Activated CD4-positive, alpha-beta memory T cell treated with anti-CD3 and anti-CD28 coated beads for 36 hours (primary cell): ENCODE measurements at regions of chr1 and their contacts with region 1.

Region 1: GRCh38 chr1:185439727-185440415 is 122.8 kb upstream of the IVNS1ABP start:
- DNase-seq: peak; percentile 49
- H3K4me3 Mint-ChIP-seq: no peak overlapping the region
- H3K27ac Mint-ChIP-seq: no peak overlapping the region
- H3K4me1 Mint-ChIP-seq: peaks cover 8% of the 10 kb centered on the region
- H3K27me3 Mint-ChIP-seq: no peaks in the 10 kb centered on the region

Region 2: GRCh38 chr1:184919892-184920291 is 520.0 kb before region 1 on chr1:
- CTCF ChIA-PET with region 1: no interaction called
- POLR2A ChIA-PET with region 1: no interaction called
- intact Hi-C with region 1: no loop called
- DNase-seq: no peak
- H3K4me3 Mint-ChIP-seq: no peak overlapping the region
- H3K27ac Mint-ChIP-seq: no peak overlapping the region
- H3K4me1 Mint-ChIP-seq: peaks cover 14% of the 10 kb centered on the region
- H3K27me3 Mint-ChIP-seq: no peaks in the 10 kb centered on the region

Region 3: GRCh38 chr1:185238447-185238846 is 201.4 kb before region 1 on chr1:
- CTCF ChIA-PET with region 1: no interaction called
- POLR2A ChIA-PET with region 1: no interaction called
- intact Hi-C with region 1: loop called (anchors 10 kb)
- DNase-seq: no peak
- H3K4me3 Mint-ChIP-seq: no peak overlapping the region
- H3K27ac Mint-ChIP-seq: no peak overlapping the region
- H3K4me1 Mint-ChIP-seq: peaks cover 28% of the 10 kb centered on the region
- H3K27me3 Mint-ChIP-seq: no peaks in the 10 kb centered on the region

Region 4: DNA sequence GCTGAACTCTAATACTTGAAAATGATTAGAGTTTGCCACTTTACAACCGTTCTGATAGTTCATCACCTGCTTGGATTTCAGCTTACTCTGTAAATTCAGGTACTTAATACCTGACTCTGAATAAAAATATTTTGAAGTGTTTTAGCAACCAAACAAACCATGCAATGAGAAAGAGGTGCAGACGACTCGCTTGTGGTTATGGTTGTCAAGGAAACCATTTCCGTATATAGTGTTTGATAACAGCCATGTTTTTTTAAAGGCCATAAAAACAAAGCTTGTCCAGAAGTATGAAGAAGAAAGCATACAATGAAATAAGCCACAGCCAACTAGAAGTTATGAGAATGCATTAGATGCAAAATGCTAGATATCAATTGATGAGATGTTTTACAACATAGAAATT is 127.1 kb after region 1 on chr1:
- CTCF ChIA-PET with region 1: no interaction called
- POLR2A ChIA-PET with region 1: no interaction called
- intact Hi-C with region 1: loop called (anchors 1 kb)
- DNase-seq: peak; percentile 57
- H3K4me3 Mint-ChIP-seq: no peak overlapping the region
- H3K27ac Mint-ChIP-seq: peak overlapping the region; percentile 74
- H3K4me1 Mint-ChIP-seq: peaks cover 62% of the 10 kb centered on the region
- H3K27me3 Mint-ChIP-seq: no peaks in the 10 kb centered on the region

Region 5: GRCh38 chr1:185663332-185663731 is 223.5 kb after region 1 on chr1:
- CTCF ChIA-PET with region 1: no interaction called
- POLR2A ChIA-PET with region 1: no interaction called
- intact Hi-C with region 1: loop called (anchors 10 kb)
- DNase-seq: no peak
- H3K4me3 Mint-ChIP-seq: no peak overlapping the region
- H3K27ac Mint-ChIP-seq: no peak overlapping the region
- H3K4me1 Mint-ChIP-seq: peaks cover 6% of the 10 kb centered on the region
- H3K27me3 Mint-ChIP-seq: no peaks in the 10 kb centered on the region